Naive thymus-derived CD4-positive, alpha-beta T cell (primary cell): ENCODE measurements at regions of chr5 and their contacts with region 1.

Region 1: DNA sequence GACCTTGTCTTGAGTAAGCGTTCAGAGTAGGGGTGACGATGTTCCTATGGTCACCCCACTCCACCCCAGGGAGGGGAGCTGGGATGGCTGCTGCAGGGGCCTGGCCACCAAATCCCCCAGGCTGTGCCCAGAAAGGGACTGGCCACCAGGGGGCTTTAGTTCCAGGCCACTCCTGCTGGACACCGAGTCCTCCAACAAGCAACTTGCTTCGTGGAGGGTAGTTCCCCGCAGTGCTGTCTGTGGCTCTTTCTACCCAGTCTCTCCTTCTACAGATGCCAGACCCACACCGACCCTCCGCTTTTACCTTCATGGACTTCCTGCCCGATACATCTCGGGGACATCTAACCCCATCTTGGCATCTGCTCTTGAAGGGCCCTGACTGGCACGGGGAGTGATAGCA is 35.7 kb upstream of the GABRP start:
- DNase-seq: no peak
- ATAC-seq: no peak
- H3K4me3 ChIP-seq: no peak overlapping the region
- H3K4me3 Mint-ChIP-seq: no peak overlapping the region
- H3K27ac ChIP-seq: no peak overlapping the region
- H3K27ac Mint-ChIP-seq: no peak overlapping the region
- H3K4me1 ChIP-seq: no peaks in the 10 kb centered on the region
- H3K4me1 Mint-ChIP-seq: peaks cover 0 to 4% (median 3%) of the 10 kb centered on the region in 7 donors
- H3K27me3 ChIP-seq: no peaks in the 10 kb centered on the region
- H3K27me3 Mint-ChIP-seq: peaks cover 27 to 43% (median 38%) of the 10 kb centered on the region in 5 donors

Region 2: GRCh38 chr5:170571875-170572852 is 175.7 kb before region 1 on chr5:
- CTCF ChIA-PET with region 1: no interaction called
- POLR2A ChIA-PET with region 1: no interaction called
- intact Hi-C with region 1: no loop called
- DNase-seq: peak in 1 of 9 donors; percentile 50
- ATAC-seq: peak; percentile 12
- H3K4me3 ChIP-seq: no peak overlapping the region
- H3K4me3 Mint-ChIP-seq: peak overlapping the region in 6 of 10 donors; percentile 18 to 54 (median 42)
- H3K27ac ChIP-seq: no peak overlapping the region
- H3K27ac Mint-ChIP-seq: peak overlapping the region in 1 of 9 donors; percentile 16
- H3K4me1 ChIP-seq: no peaks in the 10 kb centered on the region
- H3K4me1 Mint-ChIP-seq: peaks cover 2 to 15% (median 11%) of the 10 kb centered on the region in 7 donors
- H3K27me3 ChIP-seq: no peaks in the 10 kb centered on the region
- H3K27me3 Mint-ChIP-seq: peaks cover 33 to 49% (median 42%) of the 10 kb centered on the region in 5 donors

Region 3: DNA sequence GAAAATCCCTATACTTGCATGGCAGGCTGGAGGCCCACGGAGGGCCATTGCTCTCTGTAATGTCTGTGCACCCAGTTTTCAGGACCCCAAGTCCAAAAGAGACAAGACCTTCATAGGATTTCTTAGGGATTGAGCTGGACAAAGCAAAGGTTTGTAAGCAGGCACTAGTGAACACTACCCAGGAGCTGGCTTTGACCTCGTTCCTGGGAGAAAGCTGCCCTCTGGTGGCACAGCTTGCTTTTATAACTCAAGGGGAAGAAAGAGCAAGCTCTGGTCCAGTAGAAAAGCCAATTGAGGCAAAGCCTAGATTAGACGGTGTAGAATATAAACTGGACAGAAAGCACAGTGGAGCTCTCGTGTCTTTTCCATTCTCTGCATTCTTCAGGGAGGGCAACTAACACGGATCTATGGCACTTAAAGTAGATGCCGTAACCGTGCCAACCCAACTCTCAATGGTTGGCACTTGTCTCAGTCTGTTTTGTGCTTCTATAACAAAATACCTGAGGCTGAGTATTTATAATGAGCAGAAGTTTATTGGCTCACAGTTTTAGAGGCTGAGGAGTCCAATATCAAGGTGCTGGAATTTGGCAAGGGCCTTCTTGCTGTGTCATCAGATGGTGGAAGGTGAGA is 43.6 kb after region 1 on chr5:
- CTCF ChIA-PET with region 1: no interaction called
- POLR2A ChIA-PET with region 1: no interaction called
- intact Hi-C with region 1: loop called in 1 of 2 experiments (anchors 2 kb)
- DNase-seq: no peak
- ATAC-seq: no peak
- H3K4me3 ChIP-seq: no peak overlapping the region
- H3K4me3 Mint-ChIP-seq: no peak overlapping the region
- H3K27ac ChIP-seq: no peak overlapping the region
- H3K27ac Mint-ChIP-seq: no peak overlapping the region
- H3K4me1 ChIP-seq: no peaks in the 10 kb centered on the region
- H3K4me1 Mint-ChIP-seq: no peaks in the 10 kb centered on the region
- H3K27me3 ChIP-seq: no peaks in the 10 kb centered on the region
- H3K27me3 Mint-ChIP-seq: peaks cover 0 to 4% (median 0%) of the 10 kb centered on the region in 5 donors

Region 4: DNA sequence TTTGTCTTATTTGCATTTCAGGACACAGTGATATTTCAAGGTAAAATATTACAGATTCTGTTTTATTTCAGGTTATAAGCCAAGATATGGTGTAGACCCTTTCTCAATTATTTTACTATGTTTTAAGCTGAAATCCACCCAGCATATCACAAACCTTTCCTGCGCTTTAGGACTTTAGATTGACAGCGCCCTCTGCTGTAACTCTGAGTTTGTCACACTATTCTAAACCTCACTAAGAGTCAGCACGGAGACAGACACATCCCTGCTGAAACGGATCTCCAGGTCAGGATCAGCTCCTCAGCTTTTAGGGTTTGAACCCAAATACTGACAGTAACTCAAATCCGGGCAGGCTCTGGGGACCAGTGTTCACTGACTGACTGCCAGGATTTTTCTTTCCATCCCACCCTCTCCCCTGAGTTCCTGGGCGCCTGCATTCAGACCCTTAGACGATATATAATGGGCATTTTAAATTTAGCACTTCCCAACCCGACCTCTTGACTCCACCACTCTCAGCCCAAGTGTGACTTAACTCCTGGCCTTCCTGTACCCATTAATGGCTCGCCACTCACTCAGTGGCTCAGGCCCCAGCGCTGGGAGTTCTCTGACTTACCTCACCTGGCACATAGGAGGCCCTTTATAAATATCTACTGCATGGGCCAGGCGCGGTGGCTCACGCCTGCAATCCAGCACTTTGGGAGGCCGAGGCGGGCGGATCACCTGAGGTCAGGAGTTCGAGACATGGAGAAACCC is 594.7 kb after region 1 on chr5:
- CTCF ChIA-PET with region 1: no interaction called
- POLR2A ChIA-PET with region 1: no interaction called
- intact Hi-C with region 1: loop called in 1 of 2 experiments (anchors 10 kb)
- DNase-seq: peak in 4 of 9 donors; percentile 3 to 20 (median 14)
- ATAC-seq: peak; percentile 73
- H3K4me3 ChIP-seq: no peak overlapping the region
- H3K4me3 Mint-ChIP-seq: no peak overlapping the region
- H3K27ac ChIP-seq: no peak overlapping the region
- H3K27ac Mint-ChIP-seq: no peak overlapping the region
- H3K4me1 ChIP-seq: no peaks in the 10 kb centered on the region
- H3K4me1 Mint-ChIP-seq: peaks cover 0 to 2% (median 0%) of the 10 kb centered on the region in 7 donors
- H3K27me3 ChIP-seq: no peaks in the 10 kb centered on the region
- H3K27me3 Mint-ChIP-seq: peaks cover 11 to 35% (median 21%) of the 10 kb centered on the region in 5 donors